Activated CD4-positive, alpha-beta memory T cell treated with anti-CD3 and anti-CD28 coated beads, Interleukin-2, amount 10 ng/mL, durations not matched to agents 7 days and 5 days (primary cell): ENCODE measurements at regions of chr1 and their contacts with region 1.

Region 1: GRCh38 chr1:160085686-160086455 is 4.5 kb downstream of the KCNJ9 start:
- DNase-seq: peak; percentile 77
- H3K4me3 Mint-ChIP-seq: no peak overlapping the region
- H3K27ac Mint-ChIP-seq: no peak overlapping the region
- H3K4me1 Mint-ChIP-seq: peaks cover 9% of the 10 kb centered on the region
- H3K27me3 Mint-ChIP-seq: peaks cover 27% of the 10 kb centered on the region

Region 2: GRCh38 chr1:160098852-160099561 is 13.1 kb after region 1 on chr1:
- CTCF ChIA-PET with region 1: interaction called, 84 read pairs
- POLR2A ChIA-PET with region 1: interaction called, 14 read pairs
- DNase-seq: peak; percentile 98
- H3K4me3 Mint-ChIP-seq: peak overlapping the region; percentile 69
- H3K27ac Mint-ChIP-seq: peak overlapping the region; percentile 75
- H3K4me1 Mint-ChIP-seq: peaks cover 38% of the 10 kb centered on the region
- H3K27me3 Mint-ChIP-seq: no peaks in the 10 kb centered on the region

Region 3: DNA sequence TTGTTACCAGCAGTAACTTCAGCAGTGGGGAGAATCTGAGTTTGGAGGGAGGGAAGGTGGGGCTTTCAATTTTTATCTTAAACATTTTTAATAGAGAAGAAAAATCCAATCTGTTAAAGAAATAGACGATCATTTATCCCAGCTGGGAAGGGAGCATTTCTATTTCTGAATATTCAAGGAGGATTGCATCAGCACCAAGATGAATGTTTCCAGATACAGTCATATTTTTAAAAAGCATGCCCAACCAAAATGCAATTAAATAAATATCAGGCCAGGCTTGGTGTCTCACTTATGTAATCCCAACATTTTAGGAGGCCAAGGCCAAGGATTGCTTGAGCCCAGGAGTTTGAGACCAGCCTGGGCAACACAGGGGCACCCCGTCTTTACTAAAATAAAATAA is 63.8 kb after region 1 on chr1:
- CTCF ChIA-PET with region 1: no interaction called
- POLR2A ChIA-PET with region 1: no interaction called
- DNase-seq: no peak
- H3K4me3 Mint-ChIP-seq: no peak overlapping the region
- H3K27ac Mint-ChIP-seq: no peak overlapping the region
- H3K4me1 Mint-ChIP-seq: no peaks in the 10 kb centered on the region
- H3K27me3 Mint-ChIP-seq: peaks cover 15% of the 10 kb centered on the region